Activated CD4-positive, alpha-beta T cell treated with anti-CD3 and anti-CD28 coated beads, Interleukin-2, amount 10 ng/mL, durations not matched to agents 24 days and 14 days (primary cell): ENCODE measurements at regions of chr4 and their contacts with region 1.

Region 1: DNA sequence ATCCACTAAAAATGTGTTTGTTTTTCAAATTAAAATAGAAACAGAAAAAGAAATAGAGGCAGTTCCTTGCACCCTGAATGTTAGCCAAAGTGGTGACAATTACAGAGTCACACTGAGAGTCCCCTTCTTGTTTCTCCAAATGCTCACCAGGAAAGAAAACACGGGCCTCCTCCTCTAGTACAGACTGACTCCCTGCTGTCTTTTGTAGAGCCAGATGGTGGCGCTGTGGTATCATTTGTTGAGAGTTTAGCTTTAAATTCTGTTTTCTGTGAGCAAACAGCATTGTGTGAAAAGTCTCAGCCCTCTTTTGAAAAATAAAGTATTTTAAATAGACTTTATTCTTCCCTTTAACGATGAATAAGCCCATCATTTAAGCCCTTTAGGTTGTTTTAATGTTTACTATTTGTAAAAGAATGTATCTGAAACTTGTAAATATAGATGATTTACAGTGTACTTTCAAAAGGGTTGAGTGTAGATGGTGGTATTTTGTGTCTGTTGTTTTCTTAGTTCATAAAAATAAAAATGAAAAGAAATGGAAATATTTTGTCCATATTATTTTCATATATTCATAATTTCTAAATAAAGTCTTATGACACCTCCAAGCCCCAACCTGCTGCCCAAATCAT is 36.9 kb upstream of the ATOH1 start:
- DNase-seq: peak; percentile 77
- H3K4me3 Mint-ChIP-seq: no peak overlapping the region
- H3K27ac Mint-ChIP-seq: no peak overlapping the region
- H3K4me1 Mint-ChIP-seq: no peaks in the 10 kb centered on the region
- H3K27me3 Mint-ChIP-seq: no peaks in the 10 kb centered on the region

Region 2: GRCh38 chr4:94127707-94128328 is 336.1 kb after region 1 on chr4:
- intact Hi-C with region 1: loop called (anchors 5 kb)
- DNase-seq: no peak
- H3K4me3 Mint-ChIP-seq: no peak overlapping the region
- H3K27ac Mint-ChIP-seq: no peak overlapping the region
- H3K4me1 Mint-ChIP-seq: no peaks in the 10 kb centered on the region
- H3K27me3 Mint-ChIP-seq: peaks cover 2% of the 10 kb centered on the region

Region 3: GRCh38 chr4:94256828-94257227 is 465.1 kb after region 1 on chr4:
- intact Hi-C with region 1: loop called (anchors 10 kb)
- DNase-seq: no peak
- H3K4me3 Mint-ChIP-seq: no peak overlapping the region
- H3K27ac Mint-ChIP-seq: no peak overlapping the region
- H3K4me1 Mint-ChIP-seq: no peaks in the 10 kb centered on the region
- H3K27me3 Mint-ChIP-seq: no peaks in the 10 kb centered on the region

Region 4: GRCh38 chr4:94390804-94391410 is 599.2 kb after region 1 on chr4:
- intact Hi-C with region 1: loop called (anchors 2 kb)
- DNase-seq: peak; percentile 70
- H3K4me3 Mint-ChIP-seq: no peak overlapping the region
- H3K27ac Mint-ChIP-seq: no peak overlapping the region
- H3K4me1 Mint-ChIP-seq: no peaks in the 10 kb centered on the region
- H3K27me3 Mint-ChIP-seq: peaks cover 3% of the 10 kb centered on the region

Region 5: DNA sequence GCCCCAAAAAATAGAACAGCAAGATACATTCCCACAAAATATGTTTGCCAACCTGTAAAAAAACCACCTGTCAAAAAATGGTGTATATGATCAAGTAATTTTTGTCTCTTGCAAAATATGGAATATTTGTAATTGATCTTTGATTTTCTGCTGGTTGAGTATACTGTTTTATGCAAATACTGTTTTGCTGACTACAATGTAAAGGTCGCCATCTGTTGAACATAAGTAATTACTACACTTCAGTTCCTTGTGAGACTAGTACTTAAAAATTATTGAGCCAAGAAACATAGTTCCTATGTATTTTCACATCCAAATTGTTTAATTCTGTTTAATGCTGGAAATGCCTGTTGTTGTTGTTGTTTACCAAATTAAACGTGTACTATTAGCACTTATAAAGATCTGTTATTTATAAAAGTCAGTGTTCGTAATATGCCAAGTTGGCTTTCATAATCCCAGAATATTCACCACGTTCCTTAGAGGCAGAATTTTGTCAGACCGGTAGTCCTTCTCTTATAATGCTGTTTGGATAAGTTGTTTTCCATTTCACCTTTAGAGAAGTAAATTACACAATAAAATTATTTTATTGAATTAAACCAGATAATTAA is 804.3 kb after region 1 on chr4:
- intact Hi-C with region 1: loop called (anchors 5 kb)
- DNase-seq: no peak
- H3K4me3 Mint-ChIP-seq: no peak overlapping the region
- H3K27ac Mint-ChIP-seq: no peak overlapping the region
- H3K4me1 Mint-ChIP-seq: no peaks in the 10 kb centered on the region
- H3K27me3 Mint-ChIP-seq: no peaks in the 10 kb centered on the region